ENCODE measurements at regions of chr7 and their contacts with region 1.

Region 1: GRCh38 chr7:135620980-135621850 is 41.1 kb upstream of the STMP1 start:
- H3K4me3 ChIP-seq: no peak overlapping the region
- H3K27ac ChIP-seq: no peak overlapping the region
- H3K4me1 ChIP-seq: no peaks in the 10 kb centered on the region
- CTCF ChIP-seq: no peak

Region 2: DNA sequence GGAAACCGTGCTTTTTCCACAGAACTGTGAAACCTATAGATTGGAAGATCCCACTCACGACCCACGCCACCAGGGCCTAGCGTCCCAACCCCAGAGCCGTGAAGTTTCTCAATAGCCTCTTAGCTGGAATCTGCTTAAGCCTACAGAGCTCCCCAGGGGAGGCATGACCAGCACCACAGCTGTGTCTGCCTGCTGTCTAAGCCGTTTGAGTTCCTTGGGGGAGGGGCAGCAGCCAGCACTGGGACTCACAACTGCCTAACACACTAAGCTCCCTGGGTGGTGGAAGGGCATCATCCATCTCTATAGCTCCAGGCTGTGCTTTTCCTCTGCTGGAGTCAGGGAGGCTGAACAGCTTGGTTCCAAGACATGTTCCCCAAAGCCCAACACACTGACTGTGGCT is 499.3 kb before region 1 on chr7:
- CTCF ChIA-PET with region 1: no interaction called
- POLR2A ChIA-PET with region 1: no interaction called
- H3K4me3 ChIP-seq: no peak overlapping the region
- H3K27ac ChIP-seq: no peak overlapping the region
- H3K4me1 ChIP-seq: no peaks in the 10 kb centered on the region
- CTCF ChIP-seq: no peak

Region 3: GRCh38 chr7:135601182-135601581 is 20.0 kb before region 1 on chr7:
- CTCF ChIA-PET with region 1: interaction called, 12 read pairs
- POLR2A ChIA-PET with region 1: no interaction called
- H3K4me3 ChIP-seq: no peak overlapping the region
- H3K27ac ChIP-seq: no peak overlapping the region
- H3K4me1 ChIP-seq: no peaks in the 10 kb centered on the region
- CTCF ChIP-seq: no peak

Measured in HEK293 (cell line).